CD4-positive, alpha-beta T cell (primary cell): ENCODE measurements at regions of chr5 and their contacts with region 1.

Region 1: DNA sequence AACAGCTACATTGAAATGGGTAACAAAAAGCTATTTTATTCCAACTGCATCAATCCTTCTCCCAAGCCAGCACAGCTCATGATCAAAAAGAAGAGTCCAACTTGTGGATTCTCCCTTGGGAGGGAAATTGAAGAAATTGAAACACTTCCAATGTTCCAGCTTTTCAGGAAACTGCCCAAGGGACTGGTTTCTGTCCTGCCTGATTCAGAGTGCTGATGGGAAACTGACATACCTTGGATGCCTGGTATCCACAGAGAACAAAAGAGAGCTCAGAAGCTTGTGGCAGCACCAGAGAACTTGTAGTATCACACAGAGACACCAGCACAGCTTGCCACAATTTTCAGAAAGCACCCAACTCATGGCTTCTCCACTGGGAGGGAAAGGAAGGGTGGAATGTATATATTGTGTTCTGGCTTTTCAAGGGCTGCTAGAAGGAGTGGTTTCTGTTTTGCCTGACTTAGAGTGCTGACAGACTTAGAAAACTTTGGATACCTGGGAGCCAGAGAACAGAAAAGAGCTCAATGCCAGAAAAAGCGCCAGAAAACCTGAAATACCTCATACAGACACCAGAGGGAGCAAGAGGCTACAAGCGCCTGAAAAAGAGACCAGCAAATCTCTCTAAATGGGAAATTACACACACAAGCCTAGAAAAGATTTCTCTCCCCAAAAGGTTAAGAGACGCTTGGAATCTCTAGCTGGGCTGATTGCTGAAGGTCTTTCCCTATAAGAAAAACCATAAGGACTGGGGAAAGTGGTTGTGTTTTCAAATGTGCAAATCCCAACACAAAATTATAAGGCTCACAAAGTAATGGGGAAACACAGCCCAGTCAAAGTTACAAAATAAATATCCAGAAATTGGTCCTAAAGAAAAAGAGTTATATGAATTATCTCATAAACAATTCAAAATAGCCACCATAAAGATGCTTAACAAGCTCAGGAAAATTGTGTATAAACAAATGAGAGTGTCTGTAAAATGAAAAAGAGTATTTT is 178.8 kb downstream of the SPOCK1 start:
- DNase-seq: peak in 4 of 14 experiments; percentile 3 to 35 (median 29)
- ATAC-seq: no peak
- H3K4me3 ChIP-seq: no peak overlapping the region
- H3K4me3 Mint-ChIP-seq: no peak overlapping the region
- H3K27ac ChIP-seq: no peak overlapping the region
- H3K27ac Mint-ChIP-seq: no peak overlapping the region
- H3K4me1 ChIP-seq: no peaks in the 10 kb centered on the region
- H3K4me1 Mint-ChIP-seq: no peaks in the 10 kb centered on the region
- H3K27me3 ChIP-seq: peaks cover 0 to 12% of the 10 kb centered on the region in 2 experiments
- H3K27me3 Mint-ChIP-seq: peaks cover 40% of the 10 kb centered on the region
- CTCF ChIP-seq: peak; percentile 46

Region 2: DNA sequence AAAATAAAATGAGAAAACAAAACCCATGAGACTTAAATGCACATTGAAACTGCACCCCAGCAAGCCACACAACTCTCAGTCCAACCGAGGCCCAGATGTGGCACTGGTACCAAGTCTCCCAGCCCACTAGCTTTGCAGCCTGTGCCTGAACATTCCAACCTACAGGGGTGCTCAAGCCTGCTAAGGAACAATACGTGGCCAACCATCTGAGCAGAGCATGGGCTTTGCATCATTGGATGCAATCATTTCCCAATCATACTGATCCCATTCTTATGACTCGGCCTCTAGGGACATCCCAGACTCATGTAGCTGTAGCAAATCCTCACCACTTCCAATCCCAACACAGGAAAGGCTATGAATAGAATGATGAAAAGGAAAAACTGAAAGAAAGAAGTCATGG is 118.5 kb before region 1 on chr5:
- CTCF ChIA-PET with region 1: no interaction called
- POLR2A ChIA-PET with region 1: no interaction called
- intact Hi-C with region 1: no loop called
- DNase-seq: no peak
- ATAC-seq: no peak
- H3K4me3 ChIP-seq: no peak overlapping the region
- H3K4me3 Mint-ChIP-seq: no peak overlapping the region
- H3K27ac ChIP-seq: no peak overlapping the region
- H3K27ac Mint-ChIP-seq: no peak overlapping the region
- H3K4me1 ChIP-seq: no peaks in the 10 kb centered on the region
- H3K4me1 Mint-ChIP-seq: no peaks in the 10 kb centered on the region
- H3K27me3 ChIP-seq: no peaks in the 10 kb centered on the region
- H3K27me3 Mint-ChIP-seq: peaks cover 12% of the 10 kb centered on the region
- CTCF ChIP-seq: no peak

Region 3: GRCh38 chr5:137370096-137371071 is 50.0 kb after region 1 on chr5:
- CTCF ChIA-PET with region 1: no interaction called
- POLR2A ChIA-PET with region 1: no interaction called
- intact Hi-C with region 1: no loop called
- DNase-seq: no peak
- ATAC-seq: no peak
- H3K4me3 ChIP-seq: no peak overlapping the region
- H3K4me3 Mint-ChIP-seq: no peak overlapping the region
- H3K27ac ChIP-seq: no peak overlapping the region
- H3K27ac Mint-ChIP-seq: no peak overlapping the region
- H3K4me1 ChIP-seq: no peaks in the 10 kb centered on the region
- H3K4me1 Mint-ChIP-seq: no peaks in the 10 kb centered on the region
- H3K27me3 ChIP-seq: peaks cover 0 to 4% of the 10 kb centered on the region in 2 experiments
- H3K27me3 Mint-ChIP-seq: no peaks in the 10 kb centered on the region
- CTCF ChIP-seq: no peak

Region 4: DNA sequence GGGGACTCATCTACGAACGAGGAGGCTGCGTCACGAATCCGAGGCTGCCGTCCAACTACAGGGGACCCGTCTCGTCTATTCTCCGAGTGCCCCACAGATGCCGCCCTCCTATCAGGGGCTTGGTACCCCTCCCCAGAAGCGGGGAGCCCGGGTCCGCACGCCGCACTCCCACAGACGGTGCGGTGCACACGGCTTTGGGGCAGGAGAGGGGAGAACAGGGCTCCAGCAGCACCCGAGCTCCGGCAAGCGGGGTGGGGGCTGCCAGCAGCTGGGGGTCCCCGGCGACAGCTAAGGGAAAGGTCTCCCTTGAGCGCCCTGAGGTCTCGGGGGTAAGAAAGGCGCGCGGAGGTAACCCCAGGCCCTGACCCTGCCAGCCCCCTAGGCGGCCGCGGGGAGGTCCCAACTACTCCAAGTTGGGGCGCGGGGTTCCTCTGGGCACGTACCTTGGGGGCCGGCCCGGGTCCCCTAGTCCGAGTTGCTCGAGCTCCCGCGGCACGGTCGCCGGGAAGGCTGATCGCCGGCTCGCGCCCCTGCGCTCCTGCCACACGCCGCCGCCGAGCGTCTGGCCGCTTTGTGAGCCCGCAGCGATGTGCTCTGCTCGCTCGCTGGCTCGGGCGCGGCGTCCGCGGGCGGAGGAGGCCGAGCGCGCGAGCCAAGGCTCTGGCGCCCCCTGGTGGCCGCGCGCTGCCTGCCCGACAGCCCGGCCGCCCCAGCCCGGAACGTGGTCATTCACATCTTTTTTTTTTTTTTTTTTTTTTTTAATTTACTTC is 178.6 kb after region 1 on chr5 and contains the start of gene SPOCK1:
- CTCF ChIA-PET with region 1: no interaction called
- POLR2A ChIA-PET with region 1: no interaction called
- intact Hi-C with region 1: loop called (anchors 5 to 10 kb)
- DNase-seq: peak in 12 of 14 experiments; percentile 6 to 73 (median 36)
- ATAC-seq: no peak
- H3K4me3 ChIP-seq: no peak within 1 kb of the TSS
- H3K4me3 Mint-ChIP-seq: no peak within 1 kb of the TSS
- H3K27ac ChIP-seq: no peak within 1 kb of the TSS
- H3K27ac Mint-ChIP-seq: no peak within 1 kb of the TSS
- H3K4me1 ChIP-seq: peaks cover 6% of the 10 kb centered on the region
- H3K4me1 Mint-ChIP-seq: no peaks in the 10 kb centered on the region
- H3K27me3 ChIP-seq: peaks cover 20 to 37% of the 10 kb centered on the region in 2 experiments
- H3K27me3 Mint-ChIP-seq: peaks cover 35% of the 10 kb centered on the region
- CTCF ChIP-seq: no peak
- total RNA-seq, gene SPOCK1: not detected